ENCODE measurements at regions of chr9 and their contacts with region 1.

Region 1: GRCh38 chr9:34376596-34377403 is at the start of gene MYORG:
- DNase-seq: peak; percentile 92 to 99 (median 95)
- ATAC-seq: peak; percentile 73
- H3K4me3 ChIP-seq: peak within 1 kb of the TSS; percentile 74
- H3K4me3 Mint-ChIP-seq: peak within 1 kb of the TSS; percentile 96
- H3K27ac ChIP-seq: peak within 1 kb of the TSS in 1 of 2 donors; percentile 36
- H3K27ac Mint-ChIP-seq: peak within 1 kb of the TSS; percentile 77
- H3K4me1 ChIP-seq: peaks cover 48% of the 10 kb centered on the region
- H3K4me1 Mint-ChIP-seq: peaks cover 47% of the 10 kb centered on the region
- H3K27me3 ChIP-seq: no peaks in the 10 kb centered on the region
- H3K27me3 Mint-ChIP-seq: no peaks in the 10 kb centered on the region
- CTCF ChIP-seq: no peak
- total RNA-seq, gene MYORG: 0.42 to 0.58 TPM

Region 2: GRCh38 chr9:33167046-33167808 is 1209.6 kb before region 1 on chr9 and contains the start of gene B4GALT1:
- CTCF ChIA-PET with region 1: no interaction called
- POLR2A ChIA-PET with region 1: no interaction called
- intact Hi-C with region 1: loop called in 1 of 2 experiments (anchors 5 kb)
- DNase-seq: peak; percentile 90 to 99 (median 97)
- ATAC-seq: peak; percentile 77
- H3K4me3 ChIP-seq: peak within 1 kb of the TSS; percentile 85
- H3K4me3 Mint-ChIP-seq: peak within 1 kb of the TSS; percentile 93
- H3K27ac ChIP-seq: peak within 1 kb of the TSS; percentile 89 to 94
- H3K27ac Mint-ChIP-seq: peak within 1 kb of the TSS; percentile 97
- H3K4me1 ChIP-seq: peaks cover 54% of the 10 kb centered on the region
- H3K4me1 Mint-ChIP-seq: peaks cover 61% of the 10 kb centered on the region
- H3K27me3 ChIP-seq: no peaks in the 10 kb centered on the region
- H3K27me3 Mint-ChIP-seq: no peaks in the 10 kb centered on the region
- CTCF ChIP-seq: no peak
- total RNA-seq, gene B4GALT1: 74.7 to 77.0 TPM

Region 3: GRCh38 chr9:34126207-34127034 is 250.4 kb before region 1 on chr9 and contains the start of gene DCAF12:
- CTCF ChIA-PET with region 1: no interaction called
- POLR2A ChIA-PET with region 1: no interaction called
- intact Hi-C with region 1: loop called (anchors 2 to 5 kb)
- DNase-seq: peak; percentile 81 to 97 (median 88)
- ATAC-seq: peak; percentile 94
- H3K4me3 ChIP-seq: peak within 1 kb of the TSS; percentile 86
- H3K4me3 Mint-ChIP-seq: peak within 1 kb of the TSS; percentile 100
- H3K27ac ChIP-seq: peak within 1 kb of the TSS; percentile 86 to 88
- H3K27ac Mint-ChIP-seq: peak within 1 kb of the TSS; percentile 99
- H3K4me1 ChIP-seq: peaks cover 45% of the 10 kb centered on the region
- H3K4me1 Mint-ChIP-seq: peaks cover 57% of the 10 kb centered on the region
- H3K27me3 ChIP-seq: no peaks in the 10 kb centered on the region
- H3K27me3 Mint-ChIP-seq: no peaks in the 10 kb centered on the region
- CTCF ChIP-seq: no peak
- total RNA-seq, gene DCAF12: 5.4 to 5.9 TPM

Region 4: DNA sequence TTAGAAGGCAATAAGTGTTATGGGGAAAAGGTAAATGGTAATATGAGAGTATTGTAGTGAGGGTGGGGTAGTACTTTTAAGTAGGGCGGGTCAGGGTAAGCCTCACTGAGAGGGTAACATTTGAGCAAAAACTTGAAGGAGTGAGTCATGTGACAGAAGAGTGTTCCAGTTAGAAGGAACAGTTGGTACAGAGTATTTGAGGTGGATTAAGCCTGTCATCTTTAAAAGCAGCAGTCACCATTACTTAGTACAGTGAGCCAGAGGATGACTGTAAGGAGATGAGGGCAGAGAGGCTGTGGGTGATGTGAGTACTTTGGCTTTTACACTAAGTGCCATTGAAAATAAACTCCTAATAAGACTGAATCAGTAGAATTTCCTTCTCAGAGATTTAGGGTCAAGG is 143.1 kb before region 1 on chr9:
- CTCF ChIA-PET with region 1: no interaction called
- POLR2A ChIA-PET with region 1: no interaction called
- intact Hi-C with region 1: no loop called
- DNase-seq: no peak
- ATAC-seq: no peak
- H3K4me3 ChIP-seq: no peak overlapping the region
- H3K4me3 Mint-ChIP-seq: no peak overlapping the region
- H3K27ac ChIP-seq: no peak overlapping the region
- H3K27ac Mint-ChIP-seq: no peak overlapping the region
- H3K4me1 ChIP-seq: no peaks in the 10 kb centered on the region
- H3K4me1 Mint-ChIP-seq: peaks cover 29% of the 10 kb centered on the region
- H3K27me3 ChIP-seq: no peaks in the 10 kb centered on the region
- H3K27me3 Mint-ChIP-seq: no peaks in the 10 kb centered on the region
- CTCF ChIP-seq: no peak

Region 5: GRCh38 chr9:34328987-34329832 is 47.6 kb before region 1 on chr9 and contains the starts of genes KIF24 and NUDT2:
- CTCF ChIA-PET with region 1: interaction called, 22 read pairs
- POLR2A ChIA-PET with region 1: interaction called, 11 read pairs
- intact Hi-C with region 1: loop called (anchors 1 kb)
- DNase-seq: peak; percentile 88 to 100 (median 92)
- ATAC-seq: peak; percentile 92
- H3K4me3 ChIP-seq: peak within 1 kb of the TSS; percentile 93
- H3K4me3 Mint-ChIP-seq: peak within 1 kb of the TSS; percentile 90
- H3K27ac ChIP-seq: peak within 1 kb of the TSS; percentile 76 to 86
- H3K27ac Mint-ChIP-seq: peak within 1 kb of the TSS; percentile 90
- H3K4me1 ChIP-seq: peaks cover 21% of the 10 kb centered on the region
- H3K4me1 Mint-ChIP-seq: peaks cover 42% of the 10 kb centered on the region
- H3K27me3 ChIP-seq: no peaks in the 10 kb centered on the region
- H3K27me3 Mint-ChIP-seq: no peaks in the 10 kb centered on the region
- CTCF ChIP-seq: no peak
- total RNA-seq, gene KIF24: 0.05 to 0.14 TPM
- total RNA-seq, gene NUDT2: 4.5 to 7.2 TPM

Region 6: GRCh38 chr9:34446468-34446891 is 69.7 kb after region 1 on chr9:
- CTCF ChIA-PET with region 1: no interaction called
- POLR2A ChIA-PET with region 1: no interaction called
- intact Hi-C with region 1: no loop called
- DNase-seq: no peak
- ATAC-seq: no peak
- H3K4me3 ChIP-seq: no peak overlapping the region
- H3K4me3 Mint-ChIP-seq: no peak overlapping the region
- H3K27ac ChIP-seq: no peak overlapping the region
- H3K27ac Mint-ChIP-seq: no peak overlapping the region
- H3K4me1 ChIP-seq: peaks cover under 1% of the 10 kb centered on the region
- H3K4me1 Mint-ChIP-seq: peaks cover 10% of the 10 kb centered on the region
- H3K27me3 ChIP-seq: no peaks in the 10 kb centered on the region
- H3K27me3 Mint-ChIP-seq: no peaks in the 10 kb centered on the region
- CTCF ChIP-seq: no peak

Region 7: GRCh38 chr9:34522971-34523797 is 146.4 kb after region 1 on chr9 and contains the start of gene ENHO:
- CTCF ChIA-PET with region 1: no interaction called
- POLR2A ChIA-PET with region 1: interaction called, 3 read pairs
- intact Hi-C with region 1: loop called in 1 of 2 experiments (anchors 2 kb)
- DNase-seq: peak; percentile 75 to 96 (median 90)
- ATAC-seq: peak; percentile 98
- H3K4me3 ChIP-seq: peak within 1 kb of the TSS; percentile 55
- H3K4me3 Mint-ChIP-seq: peak within 1 kb of the TSS; percentile 69
- H3K27ac ChIP-seq: no peak within 1 kb of the TSS
- H3K27ac Mint-ChIP-seq: no peak within 1 kb of the TSS
- H3K4me1 ChIP-seq: peaks cover 16% of the 10 kb centered on the region
- H3K4me1 Mint-ChIP-seq: peaks cover 12% of the 10 kb centered on the region
- H3K27me3 ChIP-seq: no peaks in the 10 kb centered on the region
- H3K27me3 Mint-ChIP-seq: no peaks in the 10 kb centered on the region
- CTCF ChIP-seq: no peak
- total RNA-seq, gene ENHO: 0.45 TPM in 1 of 2 experiments, not detected in the other

Region 8: DNA sequence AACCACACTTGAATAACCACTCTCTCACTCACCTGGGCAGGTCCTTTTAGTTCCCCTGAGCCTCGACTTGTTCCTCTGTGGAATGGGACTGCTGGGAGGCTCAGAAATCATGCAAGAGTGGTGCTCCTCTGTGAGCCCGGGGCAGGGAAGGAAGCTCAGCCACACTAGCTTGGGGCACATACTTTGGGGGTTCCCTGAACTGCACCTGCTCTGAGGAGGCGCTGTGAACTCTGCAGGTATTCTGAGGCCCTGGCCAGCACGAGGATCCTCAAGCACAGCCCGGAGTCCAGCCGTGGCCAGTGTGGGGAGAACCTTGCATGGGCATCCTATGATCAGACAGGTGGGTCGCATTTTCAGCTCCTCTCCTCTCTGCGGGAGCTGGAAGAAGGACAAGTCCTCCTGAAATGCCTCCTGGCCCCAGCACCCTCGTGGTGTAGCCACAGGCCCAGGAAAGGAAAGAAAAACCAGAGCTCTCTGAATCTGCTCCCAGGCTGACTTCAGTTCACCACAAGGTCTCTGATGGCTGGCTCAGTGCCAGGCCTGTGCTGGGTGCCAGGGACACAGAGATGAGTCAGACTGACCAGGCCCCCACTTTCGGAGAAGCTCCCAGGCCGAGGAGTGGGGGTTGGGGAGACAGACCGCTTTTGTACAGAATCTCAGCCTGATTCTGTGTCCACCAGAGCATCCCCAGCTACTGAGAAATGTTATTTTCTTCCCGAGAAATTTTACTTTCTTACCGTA is 1771.7 kb after region 1 on chr9:
- CTCF ChIA-PET with region 1: no interaction called
- POLR2A ChIA-PET with region 1: no interaction called
- intact Hi-C with region 1: loop called in 1 of 2 experiments (anchors 5 kb)
- DNase-seq: peak; percentile 36 to 88 (median 66)
- ATAC-seq: no peak
- H3K4me3 ChIP-seq: no peak overlapping the region
- H3K4me3 Mint-ChIP-seq: peak overlapping the region; percentile 31
- H3K27ac ChIP-seq: peak overlapping the region; percentile 52 to 58
- H3K27ac Mint-ChIP-seq: peak overlapping the region; percentile 98
- H3K4me1 ChIP-seq: peaks cover 99% of the 10 kb centered on the region
- H3K4me1 Mint-ChIP-seq: peaks cover 84% of the 10 kb centered on the region
- H3K27me3 ChIP-seq: no peaks in the 10 kb centered on the region
- H3K27me3 Mint-ChIP-seq: no peaks in the 10 kb centered on the region
- CTCF ChIP-seq: no peak

Measured in CD4-positive, alpha-beta T cell (primary cell).